Prostate gland (tissue), 2 donors: ENCODE measurements at regions of chr11 and their contacts with region 1.

Region 1: DNA sequence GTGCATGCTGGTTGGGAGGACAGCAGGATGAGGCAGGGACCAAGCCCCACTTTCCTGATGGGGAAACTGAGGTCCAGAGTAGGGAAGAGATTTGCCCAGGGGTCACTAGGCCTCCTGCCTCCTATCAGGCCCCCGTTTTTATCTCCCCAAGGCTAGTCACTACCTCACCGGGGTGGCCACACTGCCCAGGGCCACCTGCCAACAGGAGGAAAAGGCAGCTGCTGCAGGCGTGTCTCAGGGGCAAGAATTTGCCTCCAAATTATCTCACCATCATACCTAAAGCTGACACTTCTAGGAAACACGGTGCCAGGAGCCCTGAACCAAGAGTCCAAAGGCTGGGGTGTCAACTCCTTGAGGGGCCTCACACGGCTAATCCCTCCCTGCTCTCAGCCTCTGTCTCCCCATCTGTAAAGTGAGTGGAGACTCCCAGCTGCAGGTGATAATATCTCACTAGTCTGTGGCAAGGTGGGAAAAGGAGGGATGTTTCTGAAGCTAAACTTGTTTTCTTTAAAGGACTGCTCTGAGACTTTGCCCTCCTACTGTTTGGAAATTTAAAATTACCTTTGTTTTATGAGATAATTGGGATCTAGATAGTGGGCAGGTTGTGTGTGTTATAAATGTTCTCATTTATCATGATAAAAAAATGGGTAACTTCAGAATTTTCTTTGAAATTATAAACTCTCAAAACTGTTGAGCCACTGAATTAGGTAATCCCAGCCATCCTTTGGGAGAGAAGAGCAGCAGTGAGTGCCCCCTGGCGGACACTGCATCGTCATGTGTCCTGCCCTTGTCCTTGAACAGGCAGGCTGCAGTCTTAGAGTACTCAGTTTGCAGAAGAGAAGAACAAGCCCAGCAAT is 60.0 kb downstream of the MYO7A start:
- DNase-seq: peak; percentile 72
- H3K4me3 ChIP-seq: no peak overlapping the region
- H3K27ac ChIP-seq: no peak overlapping the region
- H3K4me1 ChIP-seq: no peaks in the 10 kb centered on the region
- H3K27me3 ChIP-seq: no peaks in the 10 kb centered on the region
- CTCF ChIP-seq: peak; percentile 41 to 84 (median 76)
- POLR2A ChIP-seq: no peak

Region 2: GRCh38 chr11:77549821-77550550 is 362.0 kb after region 1 on chr11:
- intact Hi-C with region 1: loop called (anchors 5 kb)
- DNase-seq: no peak
- H3K4me3 ChIP-seq: no peak overlapping the region
- H3K27ac ChIP-seq: no peak overlapping the region
- H3K4me1 ChIP-seq: no peaks in the 10 kb centered on the region
- H3K27me3 ChIP-seq: no peaks in the 10 kb centered on the region
- CTCF ChIP-seq: no peak
- POLR2A ChIP-seq: no peak